ENCODE measurements at regions of chr16 and their contacts with region 1.

Region 1: GRCh38 chr16:59236804-59237463 is 502.8 kb upstream of the GOT2 start:
- DNase-seq: no peak

Region 2: GRCh38 chr16:58409316-58409973 is 827.5 kb before region 1 on chr16:
- intact Hi-C with region 1: loop called in 1 of 2 experiments (anchors 5 kb)
- DNase-seq: peak; percentile 86